CD4-positive, alpha-beta T cell (primary cell): ENCODE measurements at regions of chr2 and their contacts with region 1.

Region 1: DNA sequence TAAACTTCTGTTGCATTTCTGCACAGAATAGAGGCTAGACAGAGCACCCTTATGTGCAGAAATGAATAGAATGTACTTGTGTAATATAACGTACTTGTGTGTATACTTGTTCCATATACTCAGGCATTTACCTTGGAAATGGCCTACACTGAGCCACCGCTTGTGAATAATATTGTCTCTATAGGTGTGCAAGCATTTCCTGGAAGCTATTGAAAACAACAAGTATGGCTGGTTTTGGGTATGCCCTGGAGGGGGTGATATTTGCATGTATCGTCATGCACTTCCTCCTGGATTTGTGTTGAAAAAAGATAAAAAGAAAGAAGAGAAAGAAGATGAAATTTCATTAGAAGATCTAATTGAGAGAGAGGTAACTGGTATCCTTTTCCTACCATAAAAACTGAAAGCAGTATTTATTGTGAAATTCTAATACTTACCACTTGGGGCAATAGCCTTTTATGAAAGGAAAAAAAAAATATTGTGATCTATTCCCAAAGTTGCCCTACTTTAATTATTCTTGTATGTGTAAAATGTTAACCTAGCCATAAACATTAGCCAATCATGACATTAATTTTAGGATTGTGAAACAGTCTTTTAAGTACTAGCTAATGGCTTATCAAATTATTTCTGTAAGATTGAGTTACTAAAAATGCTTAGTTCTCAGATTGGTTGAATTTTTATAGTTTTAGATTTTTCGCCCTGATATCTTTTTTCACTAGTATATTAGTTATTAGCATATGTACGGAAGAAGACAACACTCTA is 18.0 kb downstream of the ZC3H15 start:
- DNase-seq: peak in 3 of 14 experiments; percentile 34 to 39 (median 36)
- ATAC-seq: peak; percentile 65
- H3K4me3 ChIP-seq: no peak overlapping the region
- H3K4me3 Mint-ChIP-seq: no peak overlapping the region
- H3K27ac ChIP-seq: no peak overlapping the region
- H3K27ac Mint-ChIP-seq: no peak overlapping the region
- H3K4me1 ChIP-seq: no peaks in the 10 kb centered on the region
- H3K4me1 Mint-ChIP-seq: peaks cover 22% of the 10 kb centered on the region
- H3K27me3 ChIP-seq: no peaks in the 10 kb centered on the region
- H3K27me3 Mint-ChIP-seq: no peaks in the 10 kb centered on the region
- CTCF ChIP-seq: peak; percentile 78

Region 2: DNA sequence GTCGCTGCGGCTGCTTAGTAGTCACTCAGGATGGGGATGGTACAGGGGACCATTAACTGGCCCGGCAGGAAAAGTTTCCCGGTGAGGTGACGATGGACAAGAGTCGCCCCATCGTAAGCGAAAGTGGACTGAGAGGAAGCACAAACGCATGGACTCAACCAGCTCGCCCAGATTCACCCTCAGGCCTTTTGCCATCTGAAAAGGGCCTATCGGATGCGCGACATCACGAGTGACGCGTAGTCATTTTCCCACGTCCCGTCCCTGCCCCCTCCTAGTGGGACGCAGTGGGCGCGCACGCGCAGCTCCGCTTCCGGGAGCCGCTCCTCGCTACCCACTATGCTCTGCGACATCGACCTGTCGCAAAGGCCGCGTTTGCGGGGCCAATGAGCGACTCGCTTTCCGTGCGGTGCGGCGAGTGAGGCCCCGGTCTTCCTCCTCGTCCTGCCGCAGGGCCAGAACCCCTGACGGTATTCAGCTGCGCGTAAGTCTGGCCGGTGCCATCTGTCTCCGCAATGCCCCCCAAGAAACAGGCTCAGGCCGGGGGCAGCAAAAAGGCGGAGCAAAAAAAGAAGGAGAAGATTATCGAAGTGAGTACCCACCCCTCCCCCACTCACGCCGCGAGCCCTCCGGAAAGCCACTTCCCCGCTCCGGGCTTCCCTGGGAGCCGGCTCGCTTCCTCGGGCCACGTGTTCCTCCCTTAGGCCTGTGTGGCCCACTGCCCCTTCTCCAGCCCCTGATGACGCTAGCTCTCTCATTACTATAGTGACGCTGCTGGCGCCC is 18.0 kb before region 1 on chr2 and contains the start of gene ZC3H15:
- CTCF ChIA-PET with region 1: interaction called, 4 read pairs
- POLR2A ChIA-PET with region 1: interaction called, 5 read pairs
- intact Hi-C with region 1: loop called in 1 of 2 experiments (anchors 1 kb)
- DNase-seq: peak; percentile 90 to 99 (median 95)
- ATAC-seq: peak; percentile 93
- H3K4me3 ChIP-seq: peak within 1 kb of the TSS; percentile 70
- H3K4me3 Mint-ChIP-seq: peak within 1 kb of the TSS; percentile 99
- H3K27ac ChIP-seq: peak within 1 kb of the TSS; percentile 87 to 96
- H3K27ac Mint-ChIP-seq: peak within 1 kb of the TSS; percentile 98
- H3K4me1 ChIP-seq: peaks cover 11% of the 10 kb centered on the region
- H3K4me1 Mint-ChIP-seq: peaks cover 78% of the 10 kb centered on the region
- H3K27me3 ChIP-seq: no peaks in the 10 kb centered on the region
- H3K27me3 Mint-ChIP-seq: no peaks in the 10 kb centered on the region
- CTCF ChIP-seq: no peak
- total RNA-seq, gene ZC3H15: 124 to 140 TPM

Region 3: DNA sequence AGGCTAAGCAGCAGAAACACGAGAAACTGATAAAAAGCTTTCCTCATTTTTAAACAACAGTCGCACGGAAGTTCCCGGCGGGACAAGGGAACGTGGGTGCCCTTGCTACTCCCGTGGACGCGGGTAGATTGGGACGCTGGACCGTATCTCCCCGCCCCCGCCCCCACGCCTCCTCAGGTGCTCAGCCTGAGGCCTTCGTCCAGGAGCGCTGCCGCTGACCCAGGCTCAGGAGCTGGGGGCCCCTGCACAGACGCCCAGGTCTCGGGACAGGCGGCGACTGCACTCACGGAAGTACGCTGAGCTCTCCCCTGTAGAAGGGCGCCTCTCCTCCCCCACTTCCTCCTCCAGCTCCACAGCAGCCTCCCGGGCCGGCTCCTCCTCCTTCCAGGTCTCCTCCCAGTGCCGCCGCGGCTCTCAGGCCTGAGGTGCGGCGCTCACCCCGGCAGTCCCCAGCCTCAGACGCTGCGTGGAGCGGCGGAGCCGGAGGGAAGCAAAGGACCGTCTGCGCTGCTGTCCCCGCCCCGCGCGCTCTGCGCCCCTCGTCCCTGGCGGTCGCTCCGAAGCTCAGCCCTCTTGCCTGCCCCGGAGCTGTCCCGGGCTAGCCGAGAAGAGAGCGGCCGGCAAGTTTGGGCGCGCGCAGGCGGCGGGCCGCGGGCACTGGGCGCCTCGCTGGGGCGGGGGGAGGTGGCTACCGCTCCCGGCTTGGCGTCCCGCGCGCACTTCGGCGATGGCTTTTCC is 85.8 kb after region 1 on chr2 and contains the start of gene ITGAV:
- CTCF ChIA-PET with region 1: interaction called, 3 read pairs
- POLR2A ChIA-PET with region 1: no interaction called
- intact Hi-C with region 1: loop called (anchors 5 to 10 kb)
- DNase-seq: peak; percentile 62 to 93 (median 76)
- ATAC-seq: peak; percentile 94
- H3K4me3 ChIP-seq: peak within 1 kb of the TSS; percentile 87
- H3K4me3 Mint-ChIP-seq: peak within 1 kb of the TSS; percentile 97
- H3K27ac ChIP-seq: peak within 1 kb of the TSS; percentile 53 to 56
- H3K27ac Mint-ChIP-seq: peak within 1 kb of the TSS; percentile 77
- H3K4me1 ChIP-seq: peaks cover 20% of the 10 kb centered on the region
- H3K4me1 Mint-ChIP-seq: peaks cover 32% of the 10 kb centered on the region
- H3K27me3 ChIP-seq: no peaks in the 10 kb centered on the region
- H3K27me3 Mint-ChIP-seq: no peaks in the 10 kb centered on the region
- CTCF ChIP-seq: no peak
- total RNA-seq, gene ITGAV: 2.9 to 3.7 TPM

Region 4: GRCh38 chr2:186641807-186642321 is 137.8 kb after region 1 on chr2:
- CTCF ChIA-PET with region 1: interaction called, 16 read pairs
- POLR2A ChIA-PET with region 1: interaction called, 4 read pairs
- intact Hi-C with region 1: loop called (anchors 1 kb)
- DNase-seq: peak in 7 of 14 experiments; percentile 7 to 67 (median 34)
- ATAC-seq: peak; percentile 76
- H3K4me3 ChIP-seq: no peak overlapping the region
- H3K4me3 Mint-ChIP-seq: no peak overlapping the region
- H3K27ac ChIP-seq: no peak overlapping the region
- H3K27ac Mint-ChIP-seq: no peak overlapping the region
- H3K4me1 ChIP-seq: no peaks in the 10 kb centered on the region
- H3K4me1 Mint-ChIP-seq: no peaks in the 10 kb centered on the region
- H3K27me3 ChIP-seq: no peaks in the 10 kb centered on the region
- H3K27me3 Mint-ChIP-seq: no peaks in the 10 kb centered on the region
- CTCF ChIP-seq: peak; percentile 73

Region 5: DNA sequence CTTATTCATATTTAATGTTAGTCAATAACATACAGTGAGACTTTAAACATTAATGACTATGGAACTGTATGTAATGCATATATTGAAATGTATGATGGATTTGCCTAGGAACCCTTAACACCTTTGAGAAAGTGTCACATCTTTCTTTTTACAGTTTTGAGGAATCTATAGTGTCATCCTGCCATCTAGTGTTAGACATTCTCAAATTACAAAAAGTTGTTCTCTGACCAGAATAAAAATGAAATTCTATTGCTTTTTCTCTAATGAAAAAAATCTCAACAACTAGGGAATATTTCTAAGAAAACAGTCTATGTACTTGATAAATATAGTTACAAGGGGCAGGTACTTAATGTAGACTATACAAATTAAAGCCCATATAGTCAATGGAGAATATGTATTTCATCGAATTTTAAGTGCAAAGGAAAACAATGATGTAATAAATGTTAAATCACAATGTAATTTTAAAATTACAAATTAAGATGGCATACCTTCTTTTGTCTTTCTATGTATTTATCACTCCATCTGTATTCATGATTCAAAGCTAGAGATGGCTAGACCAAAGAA is 949.1 kb after region 1 on chr2:
- CTCF ChIA-PET with region 1: no interaction called
- POLR2A ChIA-PET with region 1: no interaction called
- intact Hi-C with region 1: loop called (anchors 2 to 10 kb)
- DNase-seq: peak in 2 of 14 experiments; percentile 9 to 25
- ATAC-seq: no peak
- H3K4me3 ChIP-seq: no peak overlapping the region
- H3K4me3 Mint-ChIP-seq: no peak overlapping the region
- H3K27ac ChIP-seq: no peak overlapping the region
- H3K27ac Mint-ChIP-seq: no peak overlapping the region
- H3K4me1 ChIP-seq: no peaks in the 10 kb centered on the region
- H3K4me1 Mint-ChIP-seq: peaks cover 4% of the 10 kb centered on the region
- H3K27me3 ChIP-seq: no peaks in the 10 kb centered on the region
- H3K27me3 Mint-ChIP-seq: no peaks in the 10 kb centered on the region
- CTCF ChIP-seq: no peak